ENCODE measurements at regions of chr21 and their contacts with region 1.

Region 1: GRCh38 chr21:29164325-29164942 is 34.0 kb downstream of the MAP3K7CL start:
- DNase-seq: no peak
- H3K4me3 Mint-ChIP-seq: no peak overlapping the region
- H3K27ac Mint-ChIP-seq: no peak overlapping the region
- H3K4me1 Mint-ChIP-seq: peaks cover 7% of the 10 kb centered on the region
- H3K27me3 Mint-ChIP-seq: peaks cover 6% of the 10 kb centered on the region

Region 2: DNA sequence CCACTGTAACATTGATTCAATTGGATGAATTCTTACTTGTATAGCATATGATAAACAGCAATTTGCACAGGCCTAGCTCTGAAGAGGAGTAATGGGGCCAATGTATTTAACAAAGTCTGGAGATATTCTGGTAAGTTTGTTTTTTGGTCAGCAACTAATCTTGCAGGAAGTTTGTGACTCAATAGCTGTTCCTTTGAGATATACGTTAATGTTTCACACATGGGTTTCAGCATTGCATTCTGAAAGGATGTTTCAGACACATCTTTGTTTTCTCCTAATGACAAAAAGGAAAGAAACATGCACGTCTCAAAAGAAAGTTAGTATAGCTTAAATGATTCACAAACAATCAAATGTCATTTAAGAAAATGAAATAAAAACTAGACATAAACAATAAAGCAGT is 220.8 kb before region 1 on chr21:
- intact Hi-C with region 1: no loop called
- DNase-seq: no peak
- H3K4me3 Mint-ChIP-seq: no peak overlapping the region
- H3K27ac Mint-ChIP-seq: no peak overlapping the region
- H3K4me1 Mint-ChIP-seq: peaks cover 4% of the 10 kb centered on the region
- H3K27me3 Mint-ChIP-seq: no peaks in the 10 kb centered on the region

Region 3: DNA sequence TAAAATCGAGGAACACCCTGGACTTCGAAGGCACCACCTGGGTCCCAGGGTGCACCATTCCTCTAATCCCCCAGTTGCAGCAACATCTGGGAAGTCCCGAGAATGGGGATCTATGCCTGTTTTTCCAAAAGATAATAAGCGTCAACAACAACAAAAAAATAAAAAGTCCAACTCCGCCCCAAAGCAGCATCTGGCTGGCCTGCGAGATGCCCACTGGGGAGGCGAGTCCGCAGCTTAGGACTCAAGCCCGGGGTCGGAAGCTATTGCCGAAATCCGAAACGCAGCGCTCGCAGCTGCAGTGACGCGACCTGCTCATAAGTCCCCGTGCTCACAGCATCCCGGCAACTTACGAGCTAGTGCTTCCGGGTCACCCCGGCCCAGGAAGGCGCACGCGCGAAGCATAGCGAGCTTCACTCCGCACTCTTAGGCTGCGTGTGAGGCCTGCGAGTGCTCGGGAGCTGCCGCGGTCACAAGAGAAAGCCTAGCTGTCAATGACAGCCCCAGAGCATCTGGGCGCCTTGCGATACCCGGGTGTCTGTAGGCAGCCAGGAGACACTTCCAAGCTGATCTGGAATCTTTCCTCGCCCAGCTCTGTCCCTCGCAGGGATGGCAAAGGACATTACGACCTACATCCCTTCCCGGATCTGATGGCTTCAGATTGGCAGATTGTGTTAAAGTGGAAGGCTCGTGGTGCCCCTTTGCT is 161.8 kb before region 1 on chr21:
- intact Hi-C with region 1: no loop called
- DNase-seq: peak; percentile 93
- H3K4me3 Mint-ChIP-seq: peak overlapping the region; percentile 90
- H3K27ac Mint-ChIP-seq: peak overlapping the region; percentile 97
- H3K4me1 Mint-ChIP-seq: peaks cover 5% of the 10 kb centered on the region
- H3K27me3 Mint-ChIP-seq: no peaks in the 10 kb centered on the region

Region 4: DNA sequence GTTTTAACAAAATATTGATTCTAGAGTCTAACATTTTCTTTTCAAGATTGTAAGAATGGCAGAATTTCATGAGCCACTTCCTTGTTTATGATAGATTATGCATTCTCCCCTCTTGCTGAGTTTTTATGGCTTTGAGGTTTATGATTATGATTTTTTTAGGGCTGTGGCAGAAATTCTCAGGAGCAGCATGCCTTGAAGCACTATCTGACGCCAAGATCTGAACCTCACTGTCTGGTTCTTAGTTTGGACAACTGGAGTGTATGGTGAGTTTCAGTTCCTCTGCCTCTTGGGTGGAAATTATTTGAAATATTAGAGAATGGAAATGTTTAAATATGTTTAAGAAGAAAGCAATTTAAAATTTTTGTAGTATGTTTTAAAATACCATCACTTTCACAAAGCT is 129.8 kb before region 1 on chr21:
- intact Hi-C with region 1: no loop called
- DNase-seq: no peak
- H3K4me3 Mint-ChIP-seq: no peak overlapping the region
- H3K27ac Mint-ChIP-seq: no peak overlapping the region
- H3K4me1 Mint-ChIP-seq: peaks cover 17% of the 10 kb centered on the region
- H3K27me3 Mint-ChIP-seq: no peaks in the 10 kb centered on the region

Region 5: GRCh38 chr21:29181799-29182470 is 17.5 kb after region 1 on chr21:
- intact Hi-C with region 1: no loop called
- DNase-seq: no peak
- H3K4me3 Mint-ChIP-seq: peak overlapping the region; percentile 51
- H3K27ac Mint-ChIP-seq: peak overlapping the region; percentile 57
- H3K4me1 Mint-ChIP-seq: peaks cover 27% of the 10 kb centered on the region
- H3K27me3 Mint-ChIP-seq: no peaks in the 10 kb centered on the region

Region 6: GRCh38 chr21:29343519-29343918 is 179.1 kb after region 1 on chr21:
- intact Hi-C with region 1: loop called (anchors 1 kb)
- DNase-seq: no peak
- H3K4me3 Mint-ChIP-seq: no peak overlapping the region
- H3K27ac Mint-ChIP-seq: no peak overlapping the region
- H3K4me1 Mint-ChIP-seq: peaks cover 32% of the 10 kb centered on the region
- H3K27me3 Mint-ChIP-seq: no peaks in the 10 kb centered on the region

Measured in activated T-helper 1 cell treated with anti-CD3 and anti-CD28 coated beads, Interleukin-12 subunit alpha, Interleukin-12 subunit beta, Interleukin-2, Interleukin-4 antibody, amounts not matched to agents 30 ng/mL and 10 ng/mL and 1 ng/mL, durations not matched to agents 14 hours and 24 hours and 36 hours (primary cell).